Esophagus muscularis mucosa (tissue), 4 donors: ENCODE measurements at regions of chr11 and their contacts with region 1.

Region 1: GRCh38 chr11:59135648-59136461 is 6.8 kb upstream of the FAM111A start:
- DNase-seq: peak; percentile 94
- H3K4me3 ChIP-seq: peak overlapping the region in 3 of 4 donors; percentile 12 to 22 (median 15)
- H3K27ac ChIP-seq: no peak overlapping the region
- H3K4me1 ChIP-seq: peaks cover 0 to 10% (median 7%) of the 10 kb centered on the region in 4 donors
- H3K27me3 ChIP-seq: no peaks in the 10 kb centered on the region
- CTCF ChIP-seq: peak in 2 of 3 experiments; percentile 90 to 94
- EP300 ChIP-seq: no peak
- POLR2A ChIP-seq: no peak

Region 2: GRCh38 chr11:58654079-58654907 is 481.6 kb before region 1 on chr11:
- intact Hi-C with region 1: loop called (anchors 10 kb)
- DNase-seq: peak; percentile 93
- H3K4me3 ChIP-seq: no peak overlapping the region
- H3K27ac ChIP-seq: no peak overlapping the region
- H3K4me1 ChIP-seq: peaks cover 0 to 6% (median 4%) of the 10 kb centered on the region in 4 donors
- H3K27me3 ChIP-seq: no peaks in the 10 kb centered on the region
- CTCF ChIP-seq: peak; percentile 77 to 87 (median 82)
- EP300 ChIP-seq: no peak
- POLR2A ChIP-seq: no peak

Region 3: DNA sequence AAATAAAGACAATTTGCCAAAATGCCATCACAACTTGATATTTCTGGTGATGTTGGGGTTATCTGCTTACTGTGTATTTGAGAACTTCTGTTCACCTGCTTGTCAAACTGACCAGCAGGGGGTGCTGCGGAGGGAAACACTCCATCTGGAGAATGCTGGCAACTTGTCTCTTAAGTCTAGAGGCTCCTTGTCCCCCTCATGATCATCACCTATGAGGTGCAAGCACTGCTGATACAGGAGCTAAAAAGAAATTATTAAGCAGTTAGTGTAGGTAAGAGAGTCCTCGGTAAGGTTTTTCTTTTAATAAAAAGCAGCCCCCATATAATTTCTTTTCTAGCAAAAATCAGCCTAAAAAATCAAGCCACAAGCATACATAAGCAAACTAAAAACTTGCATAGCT is 82.5 kb before region 1 on chr11:
- intact Hi-C with region 1: loop called (anchors 5 kb)
- DNase-seq: no peak
- H3K4me3 ChIP-seq: no peak overlapping the region
- H3K27ac ChIP-seq: no peak overlapping the region
- H3K4me1 ChIP-seq: peaks cover 0 to 7% (median 3%) of the 10 kb centered on the region in 4 donors
- H3K27me3 ChIP-seq: peaks cover 0 to 9% (median 2%) of the 10 kb centered on the region in 4 donors
- CTCF ChIP-seq: peak; percentile 35 to 66 (median 54)
- EP300 ChIP-seq: no peak
- POLR2A ChIP-seq: no peak

Region 4: GRCh38 chr11:59076876-59077571 is 58.8 kb before region 1 on chr11:
- intact Hi-C with region 1: no loop called
- DNase-seq: peak; percentile 74
- H3K4me3 ChIP-seq: no peak overlapping the region
- H3K27ac ChIP-seq: no peak overlapping the region
- H3K4me1 ChIP-seq: no peaks in the 10 kb centered on the region
- H3K27me3 ChIP-seq: peaks cover 0 to 18% (median 0%) of the 10 kb centered on the region in 4 donors
- CTCF ChIP-seq: no peak
- EP300 ChIP-seq: no peak
- POLR2A ChIP-seq: no peak

Region 5: GRCh38 chr11:59097113-59097708 is 38.6 kb before region 1 on chr11:
- intact Hi-C with region 1: loop called (anchors 5 kb)
- DNase-seq: no peak
- H3K4me3 ChIP-seq: no peak overlapping the region
- H3K27ac ChIP-seq: no peak overlapping the region
- H3K4me1 ChIP-seq: peaks cover 0 to 9% (median 8%) of the 10 kb centered on the region in 4 donors
- H3K27me3 ChIP-seq: peaks cover 0 to 50% (median 0%) of the 10 kb centered on the region in 4 donors
- CTCF ChIP-seq: peak; percentile 45 to 63 (median 49)
- EP300 ChIP-seq: no peak
- POLR2A ChIP-seq: no peak